ENCODE measurements at regions of chr15 and their contacts with region 1.

Region 1: GRCh38 chr15:83250801-83251200 is 33.7 kb downstream of the BNC1 start:
- DNase-seq: no peak
- H3K4me3 ChIP-seq: no peak overlapping the region
- H3K27ac ChIP-seq: no peak overlapping the region
- H3K4me1 ChIP-seq: no peaks in the 10 kb centered on the region
- H3K27me3 ChIP-seq: peaks cover 0 to 9% of the 10 kb centered on the region in 2 donors
- CTCF ChIP-seq: no peak
- POLR2A ChIP-seq: no peak

Region 2: DNA sequence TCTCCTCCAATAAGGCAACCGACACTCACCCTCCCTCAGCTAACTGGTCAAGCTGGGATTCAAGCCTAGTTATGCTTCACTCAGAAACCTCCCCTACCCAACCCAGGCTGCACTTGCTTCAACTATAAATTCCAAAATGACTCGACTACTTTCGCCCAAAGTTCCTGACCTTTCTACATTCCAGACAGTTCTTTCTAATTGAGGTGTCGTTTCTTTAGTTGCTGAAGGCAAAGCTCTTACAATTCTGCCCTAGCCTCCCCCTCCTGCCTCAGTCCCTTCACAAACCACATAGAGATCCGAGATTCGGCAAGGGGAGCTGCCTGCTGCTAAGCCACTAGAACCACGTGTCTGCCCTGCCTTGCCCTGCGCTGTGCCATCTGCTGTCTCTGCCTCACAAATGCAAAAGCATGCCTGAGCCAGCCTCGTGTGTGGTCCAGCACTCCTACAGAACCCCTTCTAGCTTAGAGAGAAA is 121.7 kb after region 1 on chr15:
- intact Hi-C with region 1: loop called (anchors 5 kb)
- DNase-seq: no peak
- H3K4me3 ChIP-seq: no peak overlapping the region
- H3K27ac ChIP-seq: no peak overlapping the region
- H3K4me1 ChIP-seq: no peaks in the 10 kb centered on the region
- H3K27me3 ChIP-seq: peaks cover 0 to 33% of the 10 kb centered on the region in 2 donors
- CTCF ChIP-seq: no peak
- POLR2A ChIP-seq: no peak

Region 3: GRCh38 chr15:83904107-83905040 is 653.6 kb after region 1 on chr15:
- intact Hi-C with region 1: loop called (anchors 5 kb)
- DNase-seq: no peak
- H3K4me3 ChIP-seq: no peak overlapping the region
- H3K27ac ChIP-seq: peak overlapping the region in 1 of 2 donors; percentile 39
- H3K4me1 ChIP-seq: no peaks in the 10 kb centered on the region
- H3K27me3 ChIP-seq: no peaks in the 10 kb centered on the region
- CTCF ChIP-seq: no peak
- POLR2A ChIP-seq: no peak